Activated B cell treated with CpG ODN at 0.5 μM for 24 hours (primary cell): ENCODE measurements at regions of chr3 and their contacts with region 1.

Region 1: DNA sequence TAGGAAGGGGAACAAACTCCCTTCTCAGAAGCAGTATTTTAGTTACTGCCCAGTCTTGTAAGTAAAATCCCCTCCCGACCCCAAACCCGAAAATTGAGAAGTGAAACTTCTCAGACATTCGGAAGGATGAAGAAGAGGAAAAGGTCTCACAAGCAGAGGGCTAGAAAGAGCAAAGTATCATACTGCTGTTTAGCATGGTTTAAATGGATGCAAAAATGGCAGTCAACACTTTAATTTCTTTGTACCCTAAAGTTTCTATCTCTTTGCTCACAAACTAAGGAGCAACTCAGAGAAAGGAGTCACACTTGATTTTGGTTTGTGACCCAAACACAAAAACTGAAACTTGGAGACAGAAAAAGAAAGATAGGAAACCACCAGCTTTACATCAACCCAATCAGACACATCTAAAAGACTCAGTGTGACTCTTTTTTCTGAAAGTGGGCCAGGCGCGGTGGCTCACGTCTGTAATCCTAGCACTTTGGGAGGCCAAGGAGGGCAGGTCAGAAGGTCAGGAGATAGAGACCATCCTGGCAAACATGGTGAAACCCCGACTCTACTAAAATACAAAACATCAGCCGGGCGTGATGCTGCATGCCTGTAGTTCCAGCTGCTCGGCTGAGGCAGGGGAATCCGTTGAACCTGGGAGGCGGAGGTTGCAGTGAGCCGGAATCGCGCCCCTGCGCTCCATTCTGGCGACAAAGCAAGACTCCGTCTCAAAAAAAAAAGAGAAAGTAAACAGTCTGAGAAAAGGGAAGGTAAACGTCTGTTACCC is 63.2 kb upstream of the ATP11B start:
- DNase-seq: no peak
- ATAC-seq: peak; percentile 72
- H3K4me3 Mint-ChIP-seq: peak overlapping the region; percentile 83
- H3K27ac Mint-ChIP-seq: peak overlapping the region; percentile 72
- H3K4me1 Mint-ChIP-seq: peaks cover 40% of the 10 kb centered on the region
- H3K27me3 Mint-ChIP-seq: no peaks in the 10 kb centered on the region
- CTCF ChIP-seq: no peak

Region 2: GRCh38 chr3:182201456-182202168 is 528.5 kb before region 1 on chr3:
- CTCF ChIA-PET with region 1: no interaction called
- POLR2A ChIA-PET with region 1: no interaction called
- intact Hi-C with region 1: no loop called
- DNase-seq: no peak
- ATAC-seq: no peak
- H3K4me3 Mint-ChIP-seq: no peak overlapping the region
- H3K27ac Mint-ChIP-seq: no peak overlapping the region
- H3K4me1 Mint-ChIP-seq: no peaks in the 10 kb centered on the region
- H3K27me3 Mint-ChIP-seq: no peaks in the 10 kb centered on the region
- CTCF ChIP-seq: no peak

Region 3: DNA sequence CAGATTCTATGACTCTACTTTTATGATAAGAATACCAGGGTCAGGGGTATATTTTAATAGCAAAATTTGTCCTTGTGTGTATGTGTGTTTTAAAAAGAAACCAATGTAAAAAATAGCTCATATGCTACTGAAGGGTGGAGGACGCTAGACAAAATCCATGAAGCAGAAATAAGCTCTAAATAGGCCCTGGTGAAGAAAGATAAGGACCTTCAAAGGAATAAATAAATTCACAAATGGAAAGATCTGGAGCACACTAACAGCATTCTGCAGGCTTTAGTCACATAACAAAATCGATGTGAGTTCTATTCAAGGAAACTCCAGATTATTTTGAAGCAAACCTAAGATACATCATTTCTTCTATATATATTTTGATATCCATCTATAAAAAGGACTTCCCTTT is 36.0 kb after region 1 on chr3:
- CTCF ChIA-PET with region 1: no interaction called
- POLR2A ChIA-PET with region 1: no interaction called
- intact Hi-C with region 1: loop called (anchors 5 kb)
- DNase-seq: no peak
- ATAC-seq: no peak
- H3K4me3 Mint-ChIP-seq: no peak overlapping the region
- H3K27ac Mint-ChIP-seq: no peak overlapping the region
- H3K4me1 Mint-ChIP-seq: peaks cover 2% of the 10 kb centered on the region
- H3K27me3 Mint-ChIP-seq: peaks cover 5% of the 10 kb centered on the region
- CTCF ChIP-seq: no peak

Region 4: DNA sequence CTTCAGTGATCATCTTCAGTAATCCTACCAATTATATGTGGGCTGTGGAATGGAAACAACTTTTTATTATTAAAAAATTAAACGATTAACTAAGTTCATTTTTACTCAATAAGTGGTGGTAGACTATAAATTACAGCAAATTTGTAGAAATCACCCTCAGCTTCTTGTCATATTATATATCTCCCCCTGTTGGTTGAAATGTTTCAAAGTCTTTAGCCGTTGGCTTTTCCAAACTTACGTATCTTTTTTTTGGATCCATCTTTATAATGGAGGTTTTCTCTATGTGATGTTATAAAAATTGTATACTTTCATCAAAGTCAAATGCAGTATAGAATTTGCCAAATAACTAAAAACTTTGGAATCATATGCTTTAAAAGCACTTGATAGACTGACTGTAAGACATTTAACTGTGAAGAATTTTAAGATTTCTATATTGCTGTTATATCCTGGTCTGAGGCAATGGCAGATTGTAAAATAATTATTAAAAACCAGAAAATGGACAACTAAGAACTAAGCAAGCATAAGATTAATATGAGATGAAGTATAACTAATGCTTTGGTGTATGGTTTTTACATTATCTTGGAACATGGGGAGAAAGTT is 107.9 kb after region 1 on chr3:
- CTCF ChIA-PET with region 1: interaction called, 3 read pairs
- POLR2A ChIA-PET with region 1: no interaction called
- intact Hi-C with region 1: loop called (anchors 5 kb)
- DNase-seq: no peak
- ATAC-seq: no peak
- H3K4me3 Mint-ChIP-seq: no peak overlapping the region
- H3K27ac Mint-ChIP-seq: no peak overlapping the region
- H3K4me1 Mint-ChIP-seq: no peaks in the 10 kb centered on the region
- H3K27me3 Mint-ChIP-seq: no peaks in the 10 kb centered on the region
- CTCF ChIP-seq: no peak